Right ventricle myocardium superior (tissue), 1 donor: ENCODE measurements at regions of chr1 and their contacts with region 1.

Region 1: DNA sequence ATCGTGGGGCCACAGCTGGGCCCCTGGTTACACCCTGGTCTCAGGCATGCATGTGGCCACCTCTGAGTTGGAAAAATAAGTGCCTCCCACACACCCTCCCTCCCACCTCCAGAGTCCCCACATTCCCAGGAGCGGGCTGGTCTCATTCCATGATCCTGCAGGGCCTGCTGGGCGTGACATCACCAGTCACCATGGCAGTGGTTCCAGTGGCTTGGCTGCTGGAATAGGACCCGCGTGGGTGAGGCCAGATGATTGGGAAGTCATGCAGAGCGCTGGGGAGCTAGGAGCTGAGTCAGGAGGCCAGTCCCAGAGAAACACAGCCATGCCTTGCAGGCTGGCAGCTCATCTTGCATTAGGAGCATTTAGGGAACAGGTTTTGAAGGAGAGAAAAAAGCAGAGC is 125.4 kb upstream of the TMEM51 start:
- DNase-seq: peak; percentile 70
- ATAC-seq: peak; percentile 62

Region 2: GRCh38 chr1:14915356-14916054 is 112.6 kb before region 1 on chr1:
- intact Hi-C with region 1: loop called (anchors 5 kb)
- DNase-seq: no peak
- ATAC-seq: peak; percentile 73